ENCODE measurements at regions of chr2 and their contacts with region 1.

Region 1: DNA sequence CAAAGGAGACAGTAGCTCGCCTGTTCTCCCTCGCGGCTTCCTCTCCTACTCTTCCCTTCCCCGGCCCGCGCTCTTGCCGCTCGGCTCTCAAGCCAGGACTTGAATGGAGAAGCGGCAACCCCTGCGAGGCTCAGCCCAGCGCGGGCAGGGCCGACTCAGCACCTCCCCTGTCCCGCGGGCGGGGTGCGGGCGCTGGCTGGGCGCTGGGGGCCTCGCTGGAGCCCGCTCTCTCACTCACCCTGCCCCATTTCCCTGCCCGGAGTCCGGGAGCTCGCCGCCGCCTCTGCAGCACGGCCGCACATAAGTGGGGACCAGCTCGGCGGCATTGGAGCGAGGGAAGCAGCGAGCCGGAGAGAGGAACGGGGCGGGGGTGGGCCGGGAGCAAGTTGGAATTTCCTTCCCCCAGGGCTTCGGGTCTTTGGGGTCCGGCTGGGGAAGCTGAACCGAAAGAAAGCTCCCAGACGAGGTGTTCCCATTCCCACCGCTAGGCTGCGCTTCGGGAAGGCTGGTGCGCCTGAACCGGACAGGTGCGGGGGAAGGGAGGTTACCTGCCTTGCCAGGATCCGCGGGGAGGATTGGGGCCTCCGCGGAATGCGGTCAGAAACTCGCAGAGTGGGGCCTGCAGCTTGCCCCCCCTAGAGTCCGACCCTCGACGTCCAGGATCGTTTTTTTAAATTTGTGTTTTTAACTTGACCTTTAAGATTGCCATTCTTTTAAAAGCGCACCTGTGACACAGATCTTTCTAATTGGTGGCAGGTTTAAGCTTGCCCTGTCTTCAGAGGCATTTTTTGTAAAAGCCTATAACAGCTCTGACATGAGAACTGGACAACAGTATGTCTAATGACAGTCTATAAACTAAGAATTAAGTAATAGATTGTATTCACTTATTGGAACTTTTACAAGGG is at the start of gene COBLL1:
- DNase-seq: peak; percentile 72 to 88 (median 82)
- H3K4me3 ChIP-seq: peak within 1 kb of the TSS; percentile 87 to 98 (median 96)
- H3K27ac ChIP-seq: peak within 1 kb of the TSS; percentile 64 to 68
- H3K4me1 ChIP-seq: peaks cover 6 to 21% (median 13%) of the 10 kb centered on the region in 4 experiments
- H3K27me3 ChIP-seq: no peaks in the 10 kb centered on the region

Region 2: DNA sequence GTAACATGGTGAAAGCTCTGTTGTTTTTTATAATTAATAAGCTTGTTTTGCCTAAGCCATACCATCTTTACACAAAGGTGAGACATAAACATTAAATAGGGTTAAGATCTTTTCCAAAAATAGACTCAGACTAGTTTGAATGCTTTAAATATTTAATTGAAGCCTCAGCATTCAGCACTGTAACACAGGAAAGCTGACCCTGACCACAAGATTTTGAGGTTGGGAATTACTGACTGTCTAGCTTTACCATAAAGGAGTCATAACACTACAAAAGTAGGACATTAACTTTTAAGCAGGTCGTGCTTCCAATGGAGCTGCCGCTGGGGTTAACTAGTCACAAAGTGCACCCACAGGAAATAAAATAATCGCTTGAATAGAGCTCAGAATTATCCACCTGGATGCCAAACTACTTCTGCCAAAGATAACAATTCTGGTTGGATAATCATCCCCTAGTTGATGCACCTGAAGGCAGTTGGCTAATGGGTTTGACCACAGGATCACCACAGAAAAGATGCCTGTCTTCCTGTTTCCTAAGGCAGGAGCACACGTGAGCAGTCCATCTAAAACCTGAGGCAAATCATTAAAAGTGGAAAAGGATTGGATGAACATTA is 106.6 kb before region 1 on chr2:
- CTCF ChIA-PET with region 1: interaction called, 15 read pairs
- POLR2A ChIA-PET with region 1: no interaction called
- DNase-seq: peak in 2 of 3 donors; percentile 29 to 42
- H3K4me3 ChIP-seq: no peak overlapping the region
- H3K27ac ChIP-seq: no peak overlapping the region
- H3K4me1 ChIP-seq: peaks cover 0 to 12% (median 7%) of the 10 kb centered on the region in 4 experiments
- H3K27me3 ChIP-seq: no peaks in the 10 kb centered on the region

Region 3: GRCh38 chr2:164831887-164832286 is 10.1 kb before region 1 on chr2:
- CTCF ChIA-PET with region 1: interaction called, 14 read pairs
- POLR2A ChIA-PET with region 1: no interaction called
- DNase-seq: no peak
- H3K4me3 ChIP-seq: no peak overlapping the region
- H3K27ac ChIP-seq: no peak overlapping the region
- H3K4me1 ChIP-seq: peaks cover 0 to 6% (median 0%) of the 10 kb centered on the region in 4 experiments
- H3K27me3 ChIP-seq: no peaks in the 10 kb centered on the region

Region 4: DNA sequence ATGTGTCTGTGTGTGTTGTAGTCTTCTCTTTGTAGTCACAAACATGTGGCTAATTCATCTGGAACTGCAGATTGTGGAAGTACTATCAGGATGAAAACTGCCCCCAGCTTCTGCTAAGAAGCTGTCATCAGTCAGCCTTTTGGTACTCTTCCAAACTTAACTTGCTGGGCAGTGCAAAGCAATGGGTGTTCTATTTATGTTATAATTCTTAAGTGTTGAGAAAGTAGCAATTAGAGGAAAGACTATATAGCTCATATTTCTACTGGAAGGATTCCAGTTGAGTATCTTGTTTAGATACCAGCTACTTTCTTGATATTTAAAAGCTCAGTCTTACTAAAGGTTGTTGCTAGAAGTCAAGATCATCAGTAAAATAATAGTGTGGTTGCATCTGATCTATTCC is 61.2 kb after region 1 on chr2:
- CTCF ChIA-PET with region 1: interaction called, 18 read pairs
- POLR2A ChIA-PET with region 1: no interaction called
- DNase-seq: peak in 2 of 3 donors; percentile 69 to 77
- H3K4me3 ChIP-seq: no peak overlapping the region
- H3K27ac ChIP-seq: no peak overlapping the region
- H3K4me1 ChIP-seq: peaks cover 8 to 20% (median 16%) of the 10 kb centered on the region in 4 experiments
- H3K27me3 ChIP-seq: no peaks in the 10 kb centered on the region

Region 5: GRCh38 chr2:164910101-164910899 is 68.3 kb after region 1 on chr2:
- CTCF ChIA-PET with region 1: interaction called, 15 read pairs
- POLR2A ChIA-PET with region 1: no interaction called
- DNase-seq: peak; percentile 84 to 99 (median 97)
- H3K4me3 ChIP-seq: peak overlapping the region in 2 of 7 experiments; percentile 19 to 21
- H3K27ac ChIP-seq: peak overlapping the region; percentile 82 to 86
- H3K4me1 ChIP-seq: peaks cover 10 to 56% (median 29%) of the 10 kb centered on the region in 4 experiments
- H3K27me3 ChIP-seq: no peaks in the 10 kb centered on the region

Measured in common myeloid progenitor, CD34-positive (primary cell).